PC-3 (cell line): ENCODE measurements at regions of chr2 and their contacts with region 1.

Region 1: DNA sequence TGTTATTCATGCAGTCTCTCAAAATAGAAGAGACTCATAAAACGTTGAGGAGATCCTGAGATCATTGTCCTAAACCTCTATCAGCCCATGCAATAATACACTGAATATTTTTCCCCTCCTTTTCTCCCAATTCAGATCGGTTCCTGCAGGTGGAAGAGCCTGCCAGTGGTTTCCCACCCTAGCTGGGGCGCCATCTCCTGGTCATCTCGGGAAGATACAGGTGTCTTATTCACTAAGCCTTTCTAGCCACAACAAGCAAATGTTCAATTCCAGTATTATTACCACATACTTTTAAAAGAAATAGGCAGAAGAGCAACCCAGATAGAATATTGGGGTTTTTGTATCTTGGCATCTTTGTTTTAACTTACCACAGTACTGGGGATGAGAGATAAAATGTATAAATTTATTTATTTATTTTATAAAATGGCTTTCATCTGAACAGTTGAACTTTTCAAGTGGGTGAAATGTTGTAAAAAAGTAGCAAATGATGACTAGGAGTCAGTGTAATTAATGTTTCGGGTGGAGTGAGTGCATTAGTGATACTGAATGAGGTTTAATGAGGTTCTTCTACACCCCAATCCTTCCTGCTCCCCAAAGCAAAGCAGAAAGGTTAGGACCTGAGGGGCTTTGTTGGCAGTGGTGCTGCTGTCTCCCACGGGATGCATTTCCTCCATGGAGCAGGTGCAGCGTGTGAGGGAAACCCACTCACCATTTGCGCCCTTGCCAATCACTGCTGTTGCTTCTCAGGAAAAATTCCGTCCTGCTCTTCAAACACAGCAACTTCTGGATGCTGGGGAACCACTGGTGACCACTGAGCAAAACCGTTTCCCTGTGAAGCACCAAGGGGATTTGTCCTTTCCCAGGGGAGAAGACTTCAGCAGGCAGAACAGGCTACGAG is 147.1 kb upstream of the FHL2 start:
- DNase-seq: peak; percentile 82
- ATAC-seq: peak; percentile 79
- H3K4me3 ChIP-seq: peak overlapping the region; percentile 52
- H3K27ac ChIP-seq: no peak overlapping the region
- H3K4me1 ChIP-seq: peaks cover 8% of the 10 kb centered on the region
- H3K27me3 ChIP-seq: no peaks in the 10 kb centered on the region
- CTCF ChIP-seq: peak; percentile 91

Region 2: GRCh38 chr2:105344704-105345345 is 201.2 kb before region 1 on chr2:
- CTCF ChIA-PET with region 1: interaction called, 3 read pairs
- POLR2A ChIA-PET with region 1: no interaction called
- intact Hi-C with region 1: loop called (anchors 1 kb)
- DNase-seq: peak; percentile 77
- ATAC-seq: peak; percentile 70
- H3K4me3 ChIP-seq: no peak overlapping the region
- H3K27ac ChIP-seq: no peak overlapping the region
- H3K4me1 ChIP-seq: no peaks in the 10 kb centered on the region
- H3K27me3 ChIP-seq: no peaks in the 10 kb centered on the region
- CTCF ChIP-seq: peak; percentile 75

Region 3: GRCh38 chr2:105487142-105488069 is 58.6 kb before region 1 on chr2:
- CTCF ChIA-PET with region 1: no interaction called
- POLR2A ChIA-PET with region 1: no interaction called
- intact Hi-C with region 1: no loop called
- DNase-seq: no peak
- ATAC-seq: no peak
- H3K4me3 ChIP-seq: no peak overlapping the region
- H3K27ac ChIP-seq: no peak overlapping the region
- H3K4me1 ChIP-seq: no peaks in the 10 kb centered on the region
- H3K27me3 ChIP-seq: no peaks in the 10 kb centered on the region
- CTCF ChIP-seq: no peak